Spleen (tissue), 13 donors: ENCODE measurements at regions of chr17 and their contacts with region 1.

Region 1: GRCh38 chr17:37701496-37701898 is 43.4 kb downstream of the HNF1B start:
- DNase-seq: no peak
- H3K4me3 ChIP-seq: peak overlapping the region in 1 of 8 donors; percentile 44
- H3K27ac ChIP-seq: no peak overlapping the region
- H3K4me1 ChIP-seq: peaks cover 0 to 7% (median 0%) of the 10 kb centered on the region in 6 donors
- H3K27me3 ChIP-seq: peaks cover 0 to 28% (median 0%) of the 10 kb centered on the region in 7 donors
- CTCF ChIP-seq: peak; percentile 28 to 75 (median 58)
- POLR2A ChIP-seq: no peak

Region 2: DNA sequence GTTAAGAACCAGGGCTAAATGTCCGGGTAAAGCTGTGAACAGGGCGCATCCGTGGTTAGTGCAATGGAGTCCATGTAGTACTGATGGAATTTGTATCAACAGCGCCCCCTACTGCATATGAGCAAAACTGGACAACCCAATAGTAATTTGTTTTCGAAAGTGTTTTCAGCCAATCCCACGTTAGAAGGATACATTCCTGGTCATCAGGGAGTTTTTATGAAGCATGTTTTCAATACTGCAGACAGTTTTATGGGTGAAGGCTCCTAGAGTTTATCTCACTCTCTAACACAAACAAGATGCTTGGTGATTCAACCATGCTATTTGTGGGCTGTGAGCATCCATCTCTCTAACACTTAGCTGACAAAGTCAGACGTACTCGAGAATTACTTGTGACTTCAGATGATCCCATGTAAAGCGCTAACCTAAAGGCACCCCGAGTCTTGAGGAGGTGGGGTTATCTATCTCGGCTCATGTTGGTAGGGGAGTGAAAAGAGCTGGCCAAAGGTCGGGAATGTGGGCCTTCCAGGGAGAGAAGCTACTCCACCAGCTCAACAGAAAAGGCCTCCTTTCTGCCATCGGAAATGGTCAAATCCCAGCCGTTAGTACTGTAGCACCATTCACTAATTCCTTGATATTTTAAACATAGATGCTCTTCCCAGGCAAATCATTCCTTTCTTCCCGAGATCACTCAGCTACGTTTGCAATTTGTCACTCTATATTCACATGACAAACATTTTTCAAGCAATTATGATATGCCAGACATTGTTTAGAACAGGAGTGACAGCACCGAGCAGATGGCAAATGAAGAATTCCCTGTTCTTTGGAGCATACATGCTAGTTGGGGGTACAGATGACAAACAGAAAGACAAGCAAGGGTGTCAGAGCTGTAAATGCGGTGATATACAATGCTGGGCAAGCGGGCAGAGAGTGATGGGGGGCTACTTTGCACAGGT is 90.2 kb after region 1 on chr17:
- intact Hi-C with region 1: loop called (anchors 10 kb)
- DNase-seq: no peak
- H3K4me3 ChIP-seq: no peak overlapping the region
- H3K27ac ChIP-seq: no peak overlapping the region
- H3K4me1 ChIP-seq: no peaks in the 10 kb centered on the region
- H3K27me3 ChIP-seq: peaks cover 0 to 49% (median 10%) of the 10 kb centered on the region in 7 donors
- CTCF ChIP-seq: peak in 9 of 11 experiments; percentile 24 to 68 (median 59)
- POLR2A ChIP-seq: no peak